CD8-positive, alpha-beta T cell (primary cell): ENCODE measurements at regions of chr15 and their contacts with region 1.

Region 1: DNA sequence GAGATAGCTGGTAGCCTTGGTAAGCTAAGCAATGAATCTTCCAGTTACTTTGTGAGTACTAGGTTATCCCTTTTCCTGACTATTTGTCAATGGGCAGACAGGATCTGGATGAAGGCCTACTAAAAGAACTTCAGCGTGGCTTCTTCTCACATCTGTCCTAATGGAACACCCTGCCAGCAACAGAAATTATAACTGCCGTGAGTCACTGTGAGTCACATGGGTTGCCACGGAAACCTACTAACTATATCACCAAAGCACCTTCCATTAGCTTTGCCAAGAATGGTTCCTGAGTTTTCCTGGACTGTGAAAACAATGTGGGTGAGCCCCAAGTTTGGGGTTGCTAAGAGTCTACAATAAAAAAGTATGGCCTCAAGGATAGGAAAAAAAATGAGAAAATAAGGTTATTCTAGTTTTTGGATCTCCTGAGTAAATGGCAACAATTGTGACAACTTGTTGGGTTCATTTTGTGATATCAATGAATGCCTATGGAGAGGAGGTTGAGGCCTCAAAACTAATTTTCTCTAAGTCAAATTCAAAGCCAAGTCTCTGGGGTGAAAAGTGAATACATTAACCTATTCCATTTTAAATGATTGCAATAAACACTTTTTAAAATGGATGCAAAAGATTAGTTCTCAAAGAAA is 195.1 kb upstream of the ICE2 start:
- DNase-seq: peak in 2 of 9 experiments; percentile 15 to 22
- ATAC-seq: no peak
- H3K4me3 ChIP-seq: no peak overlapping the region
- H3K4me3 Mint-ChIP-seq: no peak overlapping the region
- H3K27ac ChIP-seq: no peak overlapping the region
- H3K27ac Mint-ChIP-seq: no peak overlapping the region
- H3K4me1 ChIP-seq: no peaks in the 10 kb centered on the region
- H3K4me1 Mint-ChIP-seq: peaks cover 2% of the 10 kb centered on the region
- H3K27me3 ChIP-seq: no peaks in the 10 kb centered on the region
- H3K27me3 Mint-ChIP-seq: no peaks in the 10 kb centered on the region
- CTCF ChIP-seq: no peak

Region 2: DNA sequence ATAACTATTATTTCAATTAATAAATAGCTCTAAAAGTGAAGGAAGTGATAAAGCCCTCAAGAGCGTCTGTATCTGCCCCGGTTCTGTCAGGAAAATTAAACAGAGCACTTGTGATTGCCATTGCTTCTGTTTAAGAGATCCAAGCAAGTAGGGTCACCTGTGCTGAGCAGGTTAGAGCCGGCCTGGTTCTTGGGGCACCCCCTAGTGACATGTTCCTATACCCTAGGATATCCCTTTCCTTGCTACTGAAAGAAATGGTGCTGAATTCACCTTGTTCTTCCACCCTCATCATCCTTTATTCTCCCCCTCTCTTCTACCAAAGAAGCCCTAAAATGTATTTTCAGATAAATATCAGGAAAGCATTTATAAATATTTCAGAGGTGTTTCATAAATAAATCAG is 231.5 kb after region 1 on chr15:
- CTCF ChIA-PET with region 1: interaction called, 5 read pairs
- POLR2A ChIA-PET with region 1: no interaction called
- intact Hi-C with region 1: loop called in 1 of 2 experiments (anchors 5 kb)
- DNase-seq: peak in 8 of 9 experiments; percentile 2 to 61 (median 34)
- ATAC-seq: peak; percentile 52
- H3K4me3 ChIP-seq: no peak overlapping the region
- H3K4me3 Mint-ChIP-seq: no peak overlapping the region
- H3K27ac ChIP-seq: no peak overlapping the region
- H3K27ac Mint-ChIP-seq: no peak overlapping the region
- H3K4me1 ChIP-seq: peaks cover 32% of the 10 kb centered on the region
- H3K4me1 Mint-ChIP-seq: peaks cover 31% of the 10 kb centered on the region
- H3K27me3 ChIP-seq: no peaks in the 10 kb centered on the region
- H3K27me3 Mint-ChIP-seq: no peaks in the 10 kb centered on the region
- CTCF ChIP-seq: no peak

Region 3: GRCh38 chr15:61038387-61038786 is 364.3 kb after region 1 on chr15:
- CTCF ChIA-PET with region 1: no interaction called
- POLR2A ChIA-PET with region 1: no interaction called
- intact Hi-C with region 1: no loop called
- DNase-seq: no peak
- ATAC-seq: no peak
- H3K4me3 ChIP-seq: no peak overlapping the region
- H3K4me3 Mint-ChIP-seq: no peak overlapping the region
- H3K27ac ChIP-seq: no peak overlapping the region
- H3K27ac Mint-ChIP-seq: no peak overlapping the region
- H3K4me1 ChIP-seq: no peaks in the 10 kb centered on the region
- H3K4me1 Mint-ChIP-seq: no peaks in the 10 kb centered on the region
- H3K27me3 ChIP-seq: peaks cover 0 to 2% of the 10 kb centered on the region in 2 experiments
- H3K27me3 Mint-ChIP-seq: peaks cover 31% of the 10 kb centered on the region
- CTCF ChIP-seq: no peak